K562 (cell line): ENCODE measurements at regions of chr5 and their contacts with region 1.

Region 1: GRCh38 chr5:177133091-177133852 is at the start of gene NSD1:
- DNase-seq: peak; percentile 95 to 97 (median 96)
- ATAC-seq: peak; percentile 84
- H3K4me3 ChIP-seq: peak within 1 kb of the TSS; percentile 71
- H3K27ac ChIP-seq: peak within 1 kb of the TSS; percentile 91
- H3K4me1 ChIP-seq: peaks cover 23 to 29% of the 10 kb centered on the region in 2 experiments
- H3K27me3 ChIP-seq: no peaks in the 10 kb centered on the region
- CTCF ChIP-seq: no peak
- EP300 ChIP-seq: no peak
- POLR2A ChIP-seq: no peak
- RAD21 ChIP-seq: no peak
- polyA plus RNA-seq, gene NSD1: 3.8 to 5.5 TPM

Region 2: DNA sequence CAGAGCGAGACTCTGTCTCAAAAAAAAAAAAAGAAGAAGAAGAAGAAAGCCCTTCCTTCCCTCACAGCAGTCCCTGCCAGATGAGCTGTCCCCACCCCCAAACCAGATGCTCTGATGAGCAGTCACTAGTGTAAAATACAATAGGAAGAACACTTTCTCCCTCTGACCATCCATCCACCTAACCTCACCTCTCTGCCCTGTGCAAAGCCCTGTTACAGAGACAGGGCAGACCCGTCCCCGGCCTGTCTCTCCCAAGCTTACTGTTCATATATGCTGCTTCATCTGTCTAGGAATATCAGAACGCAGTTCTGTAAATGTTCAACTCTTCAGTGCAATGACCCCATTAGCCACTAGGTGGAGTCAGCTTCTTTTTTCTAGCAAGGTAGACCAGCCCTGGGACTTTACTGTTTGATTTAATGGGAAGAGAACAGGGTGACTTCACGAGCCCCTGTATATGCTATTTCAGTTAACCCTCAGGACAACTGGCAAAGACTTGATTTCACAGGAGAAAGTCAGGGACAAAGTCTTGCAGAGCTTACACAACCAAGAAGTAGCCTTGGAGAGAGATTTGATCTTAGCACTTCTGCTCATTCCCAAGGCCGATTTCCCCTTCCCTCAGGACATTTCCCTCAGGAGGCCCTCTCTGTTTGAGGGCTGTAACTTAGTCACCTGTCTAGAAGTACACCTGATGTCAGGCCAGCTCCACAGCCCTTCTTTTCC is 61.4 kb before region 1 on chr5:
- CTCF ChIA-PET with region 1: no interaction called
- POLR2A ChIA-PET with region 1: no interaction called
- in situ Hi-C with region 1: no loop called
- intact Hi-C with region 1: no loop called
- DNase-seq: peak; percentile 66 to 85 (median 73)
- ATAC-seq: peak; percentile 95
- H3K4me3 ChIP-seq: no peak overlapping the region
- H3K27ac ChIP-seq: no peak overlapping the region
- H3K4me1 ChIP-seq: no peaks in the 10 kb centered on the region; a peak in 1 of 5 replicates
- H3K27me3 ChIP-seq: no peaks in the 10 kb centered on the region
- CTCF ChIP-seq: peak; percentile 82 to 91 (median 89)
- EP300 ChIP-seq: no peak
- POLR2A ChIP-seq: no peak
- RAD21 ChIP-seq: peak; percentile 44 to 73; a peak in 3 of 4 replicates

Region 3: GRCh38 chr5:177303121-177303924 is 170.1 kb after region 1 on chr5 and contains the starts of genes PRELID1 and RAB24:
- CTCF ChIA-PET with region 1: no interaction called
- POLR2A ChIA-PET with region 1: interaction called, 3 read pairs
- in situ Hi-C with region 1: no loop called
- intact Hi-C with region 1: loop called (anchors 5 kb)
- DNase-seq: peak; percentile 92 to 93 (median 92)
- ATAC-seq: peak; percentile 75
- H3K4me3 ChIP-seq: peak within 1 kb of the TSS; percentile 88
- H3K27ac ChIP-seq: peak within 1 kb of the TSS; percentile 89
- H3K4me1 ChIP-seq: peaks cover 29 to 36% of the 10 kb centered on the region in 2 experiments
- H3K27me3 ChIP-seq: no peaks in the 10 kb centered on the region
- CTCF ChIP-seq: peak in 2 of 3 experiments; percentile 19 to 38; a peak in 4 of 6 replicates
- EP300 ChIP-seq: no peak
- POLR2A ChIP-seq: peak; percentile 77
- RAD21 ChIP-seq: no peak
- polyA plus RNA-seq, gene PRELID1: 40.1 to 63.7 TPM
- polyA plus RNA-seq, gene RAB24: 13.9 to 15.7 TPM

Region 4: DNA sequence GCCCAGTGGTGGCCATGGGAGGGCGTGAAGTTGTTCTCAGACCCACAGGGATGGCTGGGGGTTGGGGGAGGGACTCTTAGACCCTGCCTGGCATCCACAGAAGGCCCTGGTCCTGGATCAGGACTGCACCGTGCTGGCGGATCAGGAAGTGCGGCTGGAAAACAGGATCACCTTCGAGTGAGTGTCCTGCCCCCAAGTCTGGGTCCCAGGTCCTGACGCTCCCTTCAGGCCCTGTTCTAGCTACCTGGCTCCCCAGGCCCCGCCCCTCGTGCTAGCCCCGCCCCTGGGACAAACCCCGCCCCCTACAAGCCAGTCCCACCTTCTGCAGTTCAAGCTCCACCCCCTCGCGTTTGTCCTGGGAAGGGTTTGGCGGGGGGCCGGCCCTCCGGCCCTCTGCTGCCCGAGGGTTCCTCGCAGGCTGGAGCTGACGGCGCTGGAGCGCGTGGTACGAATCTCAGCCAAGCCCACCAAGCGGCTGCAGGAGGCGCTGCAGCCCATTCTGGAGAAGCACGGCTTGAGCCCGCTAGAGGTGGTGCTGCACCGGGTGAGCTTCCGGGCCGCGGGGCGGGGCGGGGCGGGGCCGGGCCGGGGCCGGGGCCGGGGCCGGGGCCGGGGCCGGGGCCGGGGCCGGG is 237.3 kb after region 1 on chr5:
- CTCF ChIA-PET with region 1: no interaction called
- POLR2A ChIA-PET with region 1: no interaction called
- in situ Hi-C with region 1: no loop called
- intact Hi-C with region 1: no loop called
- DNase-seq: peak; percentile 89 to 97 (median 92)
- ATAC-seq: peak; percentile 83
- H3K4me3 ChIP-seq: peak overlapping the region; percentile 45
- H3K27ac ChIP-seq: peak overlapping the region; percentile 32; the same call in 2 of the 3 replicates
- H3K4me1 ChIP-seq: peaks cover 46 to 63% of the 10 kb centered on the region in 2 experiments
- H3K27me3 ChIP-seq: no peaks in the 10 kb centered on the region
- CTCF ChIP-seq: peak; percentile 61 to 99 (median 97)
- EP300 ChIP-seq: peak; percentile 7; the same call in 1 of the 2 replicates
- POLR2A ChIP-seq: no peak
- RAD21 ChIP-seq: peak; percentile 56 to 69